ENCODE measurements at regions of chr2 and their contacts with region 1.

Region 1: DNA sequence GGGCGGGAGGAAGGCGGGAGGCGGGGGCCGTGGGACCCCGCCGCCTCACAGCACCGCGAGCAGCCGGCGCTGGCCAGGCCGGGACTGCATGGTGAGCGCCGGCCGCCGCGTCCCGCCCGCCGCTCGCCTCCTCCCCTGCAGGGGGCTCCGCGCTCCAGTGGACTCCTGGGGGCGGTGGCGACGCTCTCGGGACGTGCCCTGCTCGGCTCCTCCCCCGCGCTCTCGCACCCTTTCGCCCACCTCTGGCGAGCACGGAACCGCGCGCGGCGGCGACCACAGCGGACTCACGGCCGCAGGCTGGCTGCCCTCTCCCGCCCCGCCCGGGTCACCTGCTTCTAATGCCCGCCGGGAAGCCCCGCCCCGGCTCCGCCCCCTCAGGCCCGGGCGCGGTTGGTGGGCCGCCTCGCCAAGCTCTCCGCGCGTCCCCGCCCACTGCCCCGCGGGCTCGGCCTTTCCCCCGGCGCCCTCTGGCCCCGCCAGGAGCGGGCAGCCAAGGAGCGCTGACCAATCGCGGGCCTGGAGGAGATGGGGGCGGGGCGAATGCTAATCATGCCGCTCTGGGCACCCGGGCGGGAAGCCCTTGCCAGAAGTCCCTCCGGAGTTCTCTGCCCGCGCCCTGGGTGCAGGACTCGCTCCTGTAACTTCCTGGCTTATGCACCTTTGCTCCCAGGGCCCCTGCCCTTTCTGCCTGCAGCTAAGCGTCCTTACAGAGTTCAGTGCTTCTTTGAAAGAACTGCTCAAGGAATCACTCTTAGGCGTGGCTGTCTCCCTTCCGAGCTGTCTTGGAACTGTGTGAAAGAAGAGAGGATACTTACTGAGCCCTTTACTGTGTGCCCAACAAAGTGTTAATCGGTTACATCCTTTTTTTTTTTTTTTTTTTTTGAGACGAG is at the start of gene FZD5:
- DNase-seq: peak; percentile 81 to 100 (median 94)
- ATAC-seq: peak; percentile 86
- H3K4me3 ChIP-seq: peak within 1 kb of the TSS; percentile 62 to 79
- H3K27ac ChIP-seq: peak within 1 kb of the TSS; percentile 82 to 85
- H3K4me1 ChIP-seq: peaks cover 4 to 57% of the 10 kb centered on the region in 2 donors
- H3K27me3 ChIP-seq: peaks cover 0 to 10% of the 10 kb centered on the region in 2 donors
- CTCF ChIP-seq: peak; percentile 32 to 68
- polyA plus RNA-seq, gene FZD5: 11.0 to 16.3 (median 12.4) TPM

Region 2: GRCh38 chr2:207612714-207613113 is 157.1 kb before region 1 on chr2:
- intact Hi-C with region 1: no loop called
- DNase-seq: no peak
- ATAC-seq: no peak
- H3K4me3 ChIP-seq: no peak overlapping the region
- H3K27ac ChIP-seq: no peak overlapping the region
- H3K4me1 ChIP-seq: peaks cover 0 to 4% of the 10 kb centered on the region in 2 donors
- H3K27me3 ChIP-seq: no peaks in the 10 kb centered on the region
- CTCF ChIP-seq: no peak

Region 3: DNA sequence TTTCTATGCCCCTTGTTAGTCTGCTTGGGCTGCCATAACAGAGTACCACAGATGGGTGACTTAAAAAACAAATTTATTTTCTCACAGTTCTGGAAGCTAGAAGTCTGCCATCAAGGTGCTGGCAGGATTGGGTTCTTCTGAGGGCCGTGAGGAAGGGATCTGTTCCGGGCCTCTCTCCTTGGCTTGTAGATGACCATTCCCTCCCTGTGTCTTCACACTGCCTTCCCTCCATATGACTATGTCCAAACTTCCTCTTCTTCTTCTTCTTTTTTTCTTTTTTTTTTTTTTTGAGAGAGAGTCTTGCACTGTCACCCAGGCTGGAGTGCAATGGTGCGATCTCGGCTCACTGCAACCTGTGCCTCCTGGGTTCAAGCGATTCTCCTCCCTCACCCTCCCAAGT is 71.5 kb before region 1 on chr2:
- intact Hi-C with region 1: no loop called
- DNase-seq: no peak
- ATAC-seq: peak; percentile 29
- H3K4me3 ChIP-seq: no peak overlapping the region
- H3K27ac ChIP-seq: peak overlapping the region in 1 of 2 donors; percentile 50
- H3K4me1 ChIP-seq: peaks cover 0 to 11% of the 10 kb centered on the region in 2 donors
- H3K27me3 ChIP-seq: no peaks in the 10 kb centered on the region
- CTCF ChIP-seq: no peak

Region 4: DNA sequence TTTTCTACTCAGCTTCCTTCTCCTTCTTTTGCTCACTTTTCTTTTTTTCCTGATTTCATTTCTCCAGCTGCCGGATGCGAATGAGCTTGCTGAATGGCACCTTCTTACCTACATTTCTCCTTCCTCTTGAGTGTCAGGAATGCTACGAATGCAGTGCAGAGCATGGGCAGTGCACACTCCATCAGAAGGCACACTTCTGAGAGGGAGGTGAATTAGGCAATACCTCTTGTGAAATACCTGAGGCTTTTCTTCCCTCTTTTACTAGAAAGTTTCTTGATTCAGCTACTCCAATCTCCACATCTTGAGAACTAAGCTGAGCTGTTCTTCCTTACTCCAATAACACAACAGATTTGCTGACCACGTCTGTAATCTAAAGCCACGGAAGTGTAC is 204.4 kb after region 1 on chr2:
- intact Hi-C with region 1: loop called in 1 of 2 experiments (anchors 10 kb)
- DNase-seq: peak in 3 of 4 donors; percentile 34 to 60 (median 54)
- ATAC-seq: peak; percentile 94
- H3K4me3 ChIP-seq: no peak overlapping the region
- H3K27ac ChIP-seq: peak overlapping the region; percentile 57 to 75
- H3K4me1 ChIP-seq: peaks cover 7 to 26% of the 10 kb centered on the region in 2 donors
- H3K27me3 ChIP-seq: no peaks in the 10 kb centered on the region
- CTCF ChIP-seq: no peak

Region 5: DNA sequence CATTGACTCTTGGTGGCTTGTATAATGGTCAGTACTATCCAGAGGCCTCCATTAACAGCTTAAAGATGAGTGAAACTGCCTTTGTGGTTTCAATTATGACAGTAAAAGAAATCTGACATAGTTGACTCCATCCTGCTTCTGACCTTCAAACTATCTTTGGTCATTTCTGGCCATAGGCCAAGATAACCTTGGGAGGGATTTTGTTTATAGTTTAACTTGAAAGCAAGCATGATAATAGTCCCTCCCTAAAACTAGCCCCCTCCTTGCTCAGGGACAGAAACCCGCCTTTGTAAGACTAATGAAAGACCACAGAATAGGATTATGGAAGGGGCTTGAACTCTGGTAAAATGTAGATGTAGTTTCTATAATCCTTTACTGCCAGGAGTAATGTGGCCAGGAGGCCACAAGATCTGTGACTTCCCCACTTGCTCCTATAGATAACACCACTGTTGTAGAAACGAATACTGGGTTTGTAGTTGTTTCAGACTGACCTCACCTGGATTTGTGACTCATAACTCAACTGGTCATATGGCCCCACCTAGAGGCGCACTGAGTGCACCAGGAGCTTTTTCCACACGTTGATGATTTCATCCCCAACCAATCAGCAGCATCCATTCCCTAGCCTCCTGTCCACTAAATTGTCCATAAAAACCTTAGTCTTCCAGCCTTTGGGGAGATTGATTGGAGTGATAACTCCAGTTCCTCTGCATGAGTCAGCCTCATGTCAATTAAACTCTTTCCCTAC is 264.1 kb after region 1 on chr2:
- intact Hi-C with region 1: loop called in 1 of 2 experiments (anchors 10 kb)
- DNase-seq: peak in 2 of 4 donors; percentile 41 to 50
- ATAC-seq: peak; percentile 92
- H3K4me3 ChIP-seq: no peak overlapping the region
- H3K27ac ChIP-seq: no peak overlapping the region
- H3K4me1 ChIP-seq: peaks cover 0 to 19% of the 10 kb centered on the region in 2 donors
- H3K27me3 ChIP-seq: no peaks in the 10 kb centered on the region
- CTCF ChIP-seq: peak; percentile 30 to 32

Region 6: DNA sequence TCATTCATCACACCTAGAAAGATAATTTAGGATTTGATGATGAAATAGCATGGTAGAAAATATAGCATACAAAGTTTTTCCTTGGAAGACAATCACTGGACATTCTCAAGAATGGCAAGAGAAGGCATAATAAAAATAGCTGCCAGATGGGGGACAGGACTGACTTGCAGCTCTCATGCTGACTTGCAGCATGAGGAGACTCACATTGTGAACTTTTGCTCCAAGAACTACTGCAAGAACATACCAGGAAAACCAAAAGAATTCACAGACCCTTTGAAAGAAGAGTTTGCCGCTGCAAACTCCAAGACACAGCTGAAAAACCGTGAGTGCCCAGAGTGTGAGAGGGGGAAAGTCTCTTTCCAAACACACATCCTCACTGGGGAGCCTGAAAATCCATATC is 307.4 kb after region 1 on chr2:
- intact Hi-C with region 1: no loop called
- DNase-seq: no peak
- ATAC-seq: no peak
- H3K4me3 ChIP-seq: no peak overlapping the region
- H3K27ac ChIP-seq: no peak overlapping the region
- H3K4me1 ChIP-seq: no peaks in the 10 kb centered on the region
- H3K27me3 ChIP-seq: peaks cover 0 to 8% of the 10 kb centered on the region in 2 donors
- CTCF ChIP-seq: no peak

Measured in left lung (tissue), 14 donors.